Naive thymus-derived CD4-positive, alpha-beta T cell (primary cell): ENCODE measurements at regions of chr10 and their contacts with region 1.

Region 1: DNA sequence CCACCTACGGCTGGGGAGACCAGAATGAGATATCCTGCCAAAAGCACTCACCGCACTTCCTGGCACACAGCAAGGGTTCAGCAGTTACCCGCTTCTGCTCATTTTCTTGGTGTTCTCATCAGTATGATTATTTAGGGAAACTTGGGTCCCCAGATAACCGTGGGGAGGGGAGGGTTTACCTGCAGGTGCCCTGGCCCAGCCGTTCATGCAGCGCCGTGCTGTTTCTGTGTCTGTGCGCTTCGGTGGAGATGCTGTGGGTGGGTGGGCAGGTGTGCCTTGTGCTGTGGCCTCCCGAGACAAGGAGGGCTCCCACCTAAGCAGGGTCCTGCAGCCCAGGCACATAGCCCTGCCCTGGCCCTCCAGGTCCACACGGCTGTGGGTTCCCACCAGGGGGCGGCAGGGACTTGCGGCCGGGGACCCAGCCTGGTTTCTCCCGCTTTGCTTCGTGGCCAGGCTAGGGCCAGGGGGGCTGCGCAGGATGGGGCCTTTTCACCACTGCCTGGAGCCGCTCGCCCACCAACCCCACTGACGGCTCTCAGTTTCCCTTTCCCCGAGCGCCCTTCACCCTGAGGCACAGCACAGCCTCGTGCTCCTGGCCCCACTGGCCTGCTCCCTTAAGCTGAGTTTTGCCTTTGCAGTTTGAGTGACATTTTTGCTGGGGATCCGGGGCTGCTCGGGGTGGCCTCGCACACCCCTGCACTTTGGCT is 78.5 kb downstream of the LHPP start:
- DNase-seq: peak; percentile 34 to 70 (median 58)
- ATAC-seq: peak; percentile 83
- H3K4me3 ChIP-seq: no peak overlapping the region
- H3K4me3 Mint-ChIP-seq: peak overlapping the region in 1 of 10 donors; percentile 16
- H3K27ac ChIP-seq: no peak overlapping the region
- H3K27ac Mint-ChIP-seq: peak overlapping the region in 2 of 9 donors; percentile 12 to 28
- H3K4me1 ChIP-seq: peaks cover 0 to 10% of the 10 kb centered on the region in 2 donors
- H3K4me1 Mint-ChIP-seq: peaks cover 0 to 10% (median 7%) of the 10 kb centered on the region in 7 donors
- H3K27me3 ChIP-seq: no peaks in the 10 kb centered on the region
- H3K27me3 Mint-ChIP-seq: no peaks in the 10 kb centered on the region

Region 2: DNA sequence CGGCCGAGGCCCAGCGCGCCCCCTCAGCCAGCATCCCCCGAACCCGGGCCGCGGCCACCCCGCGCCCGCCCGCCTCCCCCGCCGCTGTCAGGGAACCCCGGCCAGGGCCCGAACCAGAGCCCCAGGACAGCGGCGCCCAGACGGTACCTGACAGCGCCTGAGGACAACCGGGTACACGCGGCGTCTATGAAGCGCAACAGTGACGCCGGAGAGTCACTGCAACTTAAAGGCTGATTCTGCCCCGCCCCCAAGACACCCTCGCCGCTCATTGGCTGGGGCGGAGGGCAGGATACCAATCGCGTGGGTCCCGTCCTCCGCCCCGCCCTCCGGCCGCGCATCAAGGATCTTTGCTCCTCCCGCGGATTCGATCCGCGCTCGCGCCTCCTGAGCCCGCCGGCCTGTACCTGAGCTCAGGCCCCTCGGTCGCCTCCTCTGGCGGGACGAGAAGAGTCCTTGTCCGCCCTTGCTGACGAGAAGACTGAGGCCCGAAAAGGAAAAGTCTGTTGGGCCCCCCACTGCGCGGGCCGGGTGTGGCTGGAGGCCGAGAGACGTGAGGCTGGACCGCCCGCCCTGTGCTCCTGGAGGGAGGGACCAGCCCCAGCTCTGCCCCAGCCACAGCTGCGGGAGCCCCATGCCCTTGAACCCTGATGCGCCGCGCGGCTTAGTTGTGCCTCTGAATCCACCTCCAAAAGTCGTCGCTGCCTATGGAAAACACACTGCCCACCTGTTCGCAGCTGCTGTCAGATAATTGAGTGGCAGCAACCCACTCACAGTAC is 121.2 kb before region 1 on chr10 and contains the start of gene OAT:
- CTCF ChIA-PET with region 1: no interaction called
- POLR2A ChIA-PET with region 1: no interaction called
- intact Hi-C with region 1: no loop called
- DNase-seq: peak; percentile 90 to 96 (median 94)
- ATAC-seq: peak; percentile 99
- H3K4me3 ChIP-seq: peak within 1 kb of the TSS; percentile 76
- H3K4me3 Mint-ChIP-seq: peak within 1 kb of the TSS; percentile 80 to 91 (median 84)
- H3K27ac ChIP-seq: peak within 1 kb of the TSS; percentile 80
- H3K27ac Mint-ChIP-seq: peak within 1 kb of the TSS in 8 of 9 donors; percentile 31 to 90 (median 83)
- H3K4me1 ChIP-seq: peaks cover 8 to 10% of the 10 kb centered on the region in 2 donors
- H3K4me1 Mint-ChIP-seq: peaks cover 8 to 41% (median 31%) of the 10 kb centered on the region in 7 donors
- H3K27me3 ChIP-seq: no peaks in the 10 kb centered on the region
- H3K27me3 Mint-ChIP-seq: peaks cover 0 to 18% (median 2%) of the 10 kb centered on the region in 5 donors
- total RNA-seq, gene OAT: 29.6 to 47.0 (median 39.1) TPM

Region 3: GRCh38 chr10:124568848-124569622 is 28.9 kb after region 1 on chr10:
- CTCF ChIA-PET with region 1: no interaction called
- POLR2A ChIA-PET with region 1: no interaction called
- intact Hi-C with region 1: no loop called
- DNase-seq: no peak
- ATAC-seq: no peak
- H3K4me3 ChIP-seq: no peak overlapping the region
- H3K4me3 Mint-ChIP-seq: no peak overlapping the region
- H3K27ac ChIP-seq: no peak overlapping the region
- H3K27ac Mint-ChIP-seq: no peak overlapping the region
- H3K4me1 ChIP-seq: no peaks in the 10 kb centered on the region
- H3K4me1 Mint-ChIP-seq: no peaks in the 10 kb centered on the region
- H3K27me3 ChIP-seq: no peaks in the 10 kb centered on the region
- H3K27me3 Mint-ChIP-seq: no peaks in the 10 kb centered on the region

Region 4: GRCh38 chr10:124626759-124627380 is 86.8 kb after region 1 on chr10:
- CTCF ChIA-PET with region 1: interaction called, 3 read pairs
- POLR2A ChIA-PET with region 1: no interaction called
- intact Hi-C with region 1: loop called in 1 of 2 experiments (anchors 2 kb)
- DNase-seq: peak in 6 of 9 donors; percentile 29 to 57 (median 40)
- ATAC-seq: peak; percentile 77
- H3K4me3 ChIP-seq: peak overlapping the region; percentile 1
- H3K4me3 Mint-ChIP-seq: peak overlapping the region in 9 of 10 donors; percentile 46 to 71 (median 63)
- H3K27ac ChIP-seq: peak overlapping the region; percentile 16
- H3K27ac Mint-ChIP-seq: peak overlapping the region; percentile 71 to 91 (median 83)
- H3K4me1 ChIP-seq: peaks cover 34 to 38% of the 10 kb centered on the region in 2 donors
- H3K4me1 Mint-ChIP-seq: peaks cover 25 to 58% (median 48%) of the 10 kb centered on the region in 7 donors
- H3K27me3 ChIP-seq: no peaks in the 10 kb centered on the region
- H3K27me3 Mint-ChIP-seq: no peaks in the 10 kb centered on the region

Region 5: DNA sequence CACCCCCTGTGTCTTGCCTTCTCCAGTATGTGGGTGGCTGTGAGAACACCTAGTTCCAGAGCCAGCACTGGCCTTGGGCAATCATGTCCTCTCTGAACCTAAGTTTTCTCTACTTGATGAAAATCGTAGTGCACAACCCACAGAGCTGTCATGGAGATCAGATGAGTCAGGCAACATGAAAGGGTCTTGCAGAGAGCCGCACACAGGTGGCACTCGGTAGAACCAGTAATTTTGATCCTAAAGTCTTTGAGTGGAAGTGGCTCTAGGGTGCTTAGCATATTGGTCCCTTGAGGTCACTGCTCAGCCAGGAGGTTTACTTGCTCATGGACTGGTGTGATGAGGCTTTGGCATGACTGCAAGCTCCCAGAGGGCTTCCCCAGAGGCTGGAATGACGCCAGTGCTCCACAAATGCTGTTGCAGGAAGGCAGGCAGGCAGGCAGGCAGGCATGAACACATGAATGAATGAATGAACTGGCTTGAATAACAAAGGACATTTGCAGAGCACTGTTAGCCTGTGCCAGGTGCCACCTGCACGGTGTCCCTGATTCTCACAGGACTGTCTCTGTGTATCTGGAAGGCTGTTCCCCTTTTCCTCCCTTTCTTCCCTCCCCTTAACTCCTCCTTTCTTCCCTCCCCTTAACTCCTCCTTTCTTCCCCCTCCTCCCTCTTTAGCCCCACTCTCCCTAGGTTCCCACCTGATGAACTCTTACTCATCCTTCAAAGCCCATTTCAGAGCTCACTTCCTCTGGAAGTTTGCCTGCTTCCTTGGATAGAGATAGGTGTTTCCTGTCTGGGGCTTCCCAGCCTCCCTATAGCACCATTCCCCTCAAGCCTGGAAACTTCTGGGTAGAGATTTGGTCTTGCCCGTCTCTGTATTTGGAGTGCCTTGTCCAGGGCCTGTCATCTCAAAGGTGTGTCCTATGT is 647.4 kb after region 1 on chr10:
- CTCF ChIA-PET with region 1: no interaction called
- POLR2A ChIA-PET with region 1: no interaction called
- intact Hi-C with region 1: no loop called
- DNase-seq: no peak
- ATAC-seq: no peak
- H3K4me3 ChIP-seq: no peak overlapping the region
- H3K4me3 Mint-ChIP-seq: no peak overlapping the region
- H3K27ac ChIP-seq: no peak overlapping the region
- H3K27ac Mint-ChIP-seq: no peak overlapping the region
- H3K4me1 ChIP-seq: no peaks in the 10 kb centered on the region
- H3K4me1 Mint-ChIP-seq: peaks cover 0 to 2% (median 0%) of the 10 kb centered on the region in 7 donors
- H3K27me3 ChIP-seq: no peaks in the 10 kb centered on the region
- H3K27me3 Mint-ChIP-seq: peaks cover 0 to 29% (median 13%) of the 10 kb centered on the region in 5 donors